Left cardiac atrium (tissue), 4 donors: ENCODE measurements at regions of chr2 and their contacts with region 1.

Region 1: GRCh38 chr2:228657807-228658402 is 476.4 kb upstream of the SPHKAP start:
- DNase-seq: no peak
- ATAC-seq: peak in 1 of 2 donors; percentile 35

Region 2: DNA sequence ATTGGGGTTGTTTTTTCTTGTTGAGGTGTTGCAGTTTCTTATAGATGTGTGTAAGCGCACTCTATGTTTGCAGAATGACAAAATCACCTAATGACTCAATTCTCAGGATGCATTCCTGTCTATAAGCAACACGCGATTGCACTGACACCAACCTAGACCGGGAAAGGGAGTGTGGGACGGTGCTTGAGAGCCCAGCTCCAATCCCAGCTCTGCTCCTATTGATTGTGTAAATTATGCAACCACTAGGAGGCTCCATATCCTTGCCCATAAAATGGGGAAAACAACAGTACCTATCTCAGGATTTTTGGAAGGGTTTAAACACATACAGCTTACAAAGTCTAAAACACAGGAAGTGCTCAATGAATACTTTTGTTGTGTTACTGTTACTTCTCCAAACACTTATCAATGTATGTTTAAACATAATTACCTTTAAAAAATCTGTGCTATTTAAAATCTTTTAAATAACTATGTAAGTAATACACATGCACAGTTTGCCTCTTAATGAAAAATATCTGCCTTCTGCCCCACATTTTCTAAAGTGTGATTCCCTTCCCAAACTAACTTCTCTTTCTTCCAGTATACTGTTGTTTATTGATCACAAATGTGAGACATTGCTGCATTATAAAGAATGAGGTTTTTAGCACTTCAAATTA is 608.9 kb before region 1 on chr2:
- intact Hi-C with region 1: loop called in 1 of 2 experiments (anchors 5 kb)
- DNase-seq: peak; percentile 21
- ATAC-seq: peak; percentile 77 to 89

Region 3: GRCh38 chr2:228180181-228181097 is 477.5 kb before region 1 on chr2:
- intact Hi-C with region 1: loop called (anchors 5 to 10 kb)
- DNase-seq: peak; percentile 21
- ATAC-seq: peak; percentile 74 to 77

Region 4: GRCh38 chr2:228798458-228799207 is 140.7 kb after region 1 on chr2:
- intact Hi-C with region 1: no loop called
- DNase-seq: no peak
- ATAC-seq: peak in 1 of 2 donors; percentile 44